Endothelial cell of umbilical vein (primary cell): ENCODE measurements at regions of chr17 and their contacts with region 1.

Region 1: DNA sequence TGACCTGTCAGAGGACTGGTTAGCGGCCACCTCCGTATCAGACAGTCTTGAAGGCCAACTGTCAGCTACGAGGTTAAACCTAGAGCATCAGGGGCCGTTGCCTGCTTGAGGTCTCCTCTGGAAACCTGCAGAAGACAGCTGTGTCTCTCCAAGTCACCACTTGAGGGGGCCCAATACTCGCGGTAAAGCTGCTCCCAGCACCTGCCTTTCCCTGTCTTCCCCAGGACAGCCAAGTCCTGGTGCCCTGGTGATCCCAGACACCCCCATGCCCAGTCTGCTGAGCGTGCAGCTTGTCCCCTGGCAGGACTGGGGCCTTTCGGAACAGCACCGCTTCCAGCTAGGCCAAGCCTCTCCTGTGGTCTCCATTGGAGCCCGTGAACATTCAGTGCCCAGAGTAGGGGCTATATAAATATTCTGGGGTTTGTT is 80.1 kb downstream of the DNAH17 start:
- DNase-seq: peak; percentile 76
- H3K4me3 ChIP-seq: no peak overlapping the region
- H3K27ac ChIP-seq: no peak overlapping the region
- H3K4me1 ChIP-seq: no peaks in the 10 kb centered on the region
- H3K27me3 ChIP-seq: no peaks in the 10 kb centered on the region
- CTCF ChIP-seq: peak; percentile 63 to 91
- POLR2A ChIP-seq: no peak

Region 2: GRCh38 chr17:78458736-78459331 is 38.3 kb before region 1 on chr17:
- CTCF ChIA-PET with region 1: no interaction called
- POLR2A ChIA-PET with region 1: no interaction called
- dilution Hi-C with region 1: no loop called
- intact Hi-C with region 1: no loop called
- DNase-seq: no peak
- H3K4me3 ChIP-seq: no peak overlapping the region
- H3K27ac ChIP-seq: no peak overlapping the region
- H3K4me1 ChIP-seq: no peaks in the 10 kb centered on the region
- H3K27me3 ChIP-seq: no peaks in the 10 kb centered on the region
- CTCF ChIP-seq: no peak
- POLR2A ChIP-seq: no peak

Region 3: GRCh38 chr17:78609191-78609641 is 112.1 kb after region 1 on chr17:
- CTCF ChIA-PET with region 1: interaction called, 27 read pairs
- POLR2A ChIA-PET with region 1: no interaction called
- dilution Hi-C with region 1: no loop called
- intact Hi-C with region 1: loop called (anchors 5 kb)
- DNase-seq: no peak
- H3K4me3 ChIP-seq: no peak overlapping the region
- H3K27ac ChIP-seq: no peak overlapping the region
- H3K4me1 ChIP-seq: no peaks in the 10 kb centered on the region
- H3K27me3 ChIP-seq: peaks cover 7% of the 10 kb centered on the region in 2 experiments
- CTCF ChIP-seq: no peak
- POLR2A ChIP-seq: no peak

Region 4: DNA sequence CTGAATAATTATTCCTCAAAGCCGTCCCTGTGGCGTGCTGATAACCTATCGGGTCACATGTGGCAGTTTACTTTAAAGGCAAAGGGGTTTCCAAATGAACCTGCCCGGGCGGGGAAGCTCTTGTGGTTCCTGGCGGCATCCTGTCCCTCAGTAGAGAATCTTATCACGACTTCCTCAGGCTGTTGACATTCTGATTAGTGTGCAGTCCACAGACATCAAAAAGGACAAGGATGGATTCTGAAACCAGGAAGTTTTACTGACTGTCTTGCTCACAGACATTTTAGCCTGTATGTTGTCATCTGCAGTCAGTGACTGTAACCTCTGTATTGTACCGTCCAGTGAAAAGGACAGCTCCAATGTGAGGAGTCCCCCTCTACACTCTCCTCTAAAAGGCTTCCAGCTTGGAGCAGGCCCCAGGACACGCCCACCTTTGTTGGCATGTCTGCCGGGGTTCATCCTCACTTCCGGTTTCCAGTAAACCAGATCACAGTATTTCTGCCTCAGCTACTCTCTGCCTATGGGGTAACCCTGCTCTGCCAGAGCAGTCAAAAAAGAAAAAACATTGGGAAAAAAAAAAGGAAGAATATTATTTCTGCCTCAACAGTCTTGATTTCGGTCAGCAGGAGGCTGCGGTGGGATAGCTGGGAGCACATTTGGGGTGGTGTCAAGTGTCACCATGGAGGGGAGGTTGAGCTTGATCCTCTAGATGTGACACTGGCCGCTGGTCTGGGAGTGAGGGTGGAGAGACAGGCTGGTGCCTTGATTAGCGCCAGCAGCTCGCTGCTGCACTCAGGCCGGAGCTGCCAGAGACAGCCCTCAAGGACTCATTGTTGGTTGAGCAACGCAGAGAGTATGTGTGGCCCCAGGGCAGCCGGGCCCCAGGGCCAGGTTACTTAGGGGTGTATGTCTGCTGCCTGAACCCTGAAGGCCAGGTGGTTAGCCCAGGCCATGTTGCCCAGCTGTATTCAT is 169.1 kb after region 1 on chr17:
- CTCF ChIA-PET with region 1: interaction called, 11 read pairs
- POLR2A ChIA-PET with region 1: no interaction called
- dilution Hi-C with region 1: no loop called
- intact Hi-C with region 1: no loop called
- DNase-seq: peak; percentile 94
- H3K4me3 ChIP-seq: no peak overlapping the region
- H3K27ac ChIP-seq: peak overlapping the region; percentile 84
- H3K4me1 ChIP-seq: peaks cover 24% of the 10 kb centered on the region
- H3K27me3 ChIP-seq: peaks cover 0 to 5% of the 10 kb centered on the region in 2 experiments
- CTCF ChIP-seq: no peak
- POLR2A ChIP-seq: peak; percentile 73

Region 5: GRCh38 chr17:78716814-78717393 is 219.8 kb after region 1 on chr17:
- CTCF ChIA-PET with region 1: interaction called, 20 read pairs
- POLR2A ChIA-PET with region 1: no interaction called
- dilution Hi-C with region 1: no loop called
- intact Hi-C with region 1: no loop called
- DNase-seq: peak; percentile 57
- H3K4me3 ChIP-seq: peak overlapping the region in 2 of 3 experiments; percentile 18 to 34
- H3K27ac ChIP-seq: no peak overlapping the region
- H3K4me1 ChIP-seq: peaks cover 35% of the 10 kb centered on the region
- H3K27me3 ChIP-seq: no peaks in the 10 kb centered on the region
- CTCF ChIP-seq: no peak
- POLR2A ChIP-seq: no peak

Region 6: DNA sequence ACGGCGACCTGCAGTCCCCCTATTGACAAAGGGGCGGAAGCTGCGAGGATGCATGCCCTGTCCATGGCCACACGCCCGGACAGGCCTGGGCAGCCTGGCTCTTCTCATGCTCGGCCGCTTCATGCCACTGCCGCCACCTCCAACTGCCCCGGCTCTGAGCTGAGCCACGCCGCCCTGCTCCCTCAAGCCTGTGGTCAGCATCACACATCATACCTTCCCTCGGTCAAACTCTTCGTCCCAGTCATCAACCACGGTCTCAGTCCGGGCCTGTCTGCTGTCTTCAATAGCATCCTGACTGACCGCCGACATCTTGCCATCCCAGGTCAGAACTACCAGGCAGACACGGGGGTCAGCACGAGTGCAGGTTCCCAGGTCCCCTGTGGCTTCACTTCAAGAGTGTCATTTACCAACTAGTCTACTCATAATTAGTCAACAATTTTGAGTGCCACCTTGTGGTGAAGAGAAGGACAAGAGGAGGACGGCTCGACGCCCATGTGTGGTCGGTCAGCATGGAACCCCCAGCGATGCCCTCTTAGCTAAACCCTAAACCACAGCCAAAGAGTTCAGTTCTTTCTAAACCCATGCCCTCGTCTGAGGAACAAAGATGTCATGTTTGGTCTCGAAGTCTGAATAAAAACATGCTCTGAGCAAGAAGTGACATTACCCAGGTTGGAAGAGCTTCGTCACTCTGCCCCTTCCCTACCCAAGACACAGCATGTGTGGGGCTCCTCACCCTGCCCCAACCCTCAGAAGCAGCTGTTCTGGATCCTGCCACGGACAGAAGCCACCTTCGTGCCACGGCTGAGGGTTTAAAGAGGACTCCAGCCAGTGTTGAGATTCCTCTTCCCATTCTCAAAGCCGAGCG is 301.8 kb after region 1 on chr17:
- CTCF ChIA-PET with region 1: interaction called, 29 read pairs
- POLR2A ChIA-PET with region 1: no interaction called
- dilution Hi-C with region 1: no loop called
- intact Hi-C with region 1: loop called (anchors 1 kb)
- DNase-seq: peak; percentile 28
- H3K4me3 ChIP-seq: no peak overlapping the region
- H3K27ac ChIP-seq: no peak overlapping the region
- H3K4me1 ChIP-seq: no peaks in the 10 kb centered on the region
- H3K27me3 ChIP-seq: no peaks in the 10 kb centered on the region
- CTCF ChIP-seq: peak; percentile 38 to 41
- POLR2A ChIP-seq: no peak